ENCODE measurements at regions of chr7 and their contacts with region 1.

Region 1: GRCh38 chr7:69435711-69436110 is 162.6 kb upstream of the AUTS2 start:
- DNase-seq: no peak
- H3K4me3 ChIP-seq: no peak overlapping the region
- H3K27ac ChIP-seq: no peak overlapping the region
- H3K27me3 ChIP-seq: no peaks in the 10 kb centered on the region
- CTCF ChIP-seq: no peak

Region 2: GRCh38 chr7:69295977-69296376 is 139.7 kb before region 1 on chr7:
- CTCF ChIA-PET with region 1: no interaction called
- POLR2A ChIA-PET with region 1: interaction called, 10 read pairs
- DNase-seq: no peak
- H3K4me3 ChIP-seq: no peak overlapping the region
- H3K27ac ChIP-seq: no peak overlapping the region
- H3K27me3 ChIP-seq: no peaks in the 10 kb centered on the region
- CTCF ChIP-seq: no peak

Region 3: GRCh38 chr7:69677054-69677852 is 241.5 kb after region 1 on chr7:
- CTCF ChIA-PET with region 1: no interaction called
- POLR2A ChIA-PET with region 1: no interaction called
- DNase-seq: no peak
- H3K4me3 ChIP-seq: no peak overlapping the region
- H3K27ac ChIP-seq: no peak overlapping the region
- H3K27me3 ChIP-seq: no peaks in the 10 kb centered on the region
- CTCF ChIP-seq: 0 out of 2 replicates have a peak, but pooled peaks have one; percentile 8